ENCODE measurements at regions of chr10 and their contacts with region 1.

Region 1: DNA sequence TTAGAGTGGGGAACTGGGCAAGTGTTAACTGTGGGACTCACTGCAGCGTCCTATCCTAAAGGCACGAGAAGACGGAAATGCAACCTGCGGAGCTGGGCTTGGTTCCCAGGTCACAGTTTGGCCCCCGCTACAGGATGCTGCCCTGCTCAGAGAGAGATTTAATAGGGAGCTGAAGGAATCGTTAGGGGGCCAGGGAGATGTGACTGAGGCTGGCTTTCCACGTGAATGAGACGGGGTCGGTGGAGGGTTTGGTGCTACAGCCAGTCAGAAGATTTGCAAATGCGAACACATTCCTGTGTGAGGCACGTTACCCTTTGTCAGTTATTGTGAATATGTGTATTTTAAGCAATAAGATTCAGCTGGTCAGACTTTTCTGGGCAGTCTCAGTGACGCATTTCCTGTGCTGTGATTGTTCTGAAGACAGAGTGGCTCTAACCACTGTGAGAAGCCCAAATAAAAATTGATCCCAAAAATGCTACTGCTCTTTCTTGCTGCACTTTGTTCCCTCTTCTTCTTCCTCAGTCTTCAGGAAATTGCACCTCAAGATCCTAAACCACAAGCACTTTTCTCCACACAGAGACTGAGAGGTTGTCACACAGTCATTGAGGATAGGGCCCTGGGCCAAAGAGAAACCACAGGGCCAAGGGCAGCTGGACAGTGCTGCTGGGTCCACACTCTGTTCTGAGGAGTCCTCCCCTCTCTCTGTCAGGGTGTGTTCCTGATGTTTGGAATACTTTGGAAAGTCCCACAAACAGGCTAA is 21.2 kb downstream of the CYP17A1 start:
- DNase-seq: peak; percentile 92
- H3K4me3 ChIP-seq: no peak overlapping the region
- H3K27ac ChIP-seq: peak overlapping the region; percentile 99
- H3K4me1 ChIP-seq: peaks cover 42% of the 10 kb centered on the region
- H3K27me3 ChIP-seq: no peaks in the 10 kb centered on the region
- CTCF ChIP-seq: no peak
- POLR2A ChIP-seq: no peak

Region 2: DNA sequence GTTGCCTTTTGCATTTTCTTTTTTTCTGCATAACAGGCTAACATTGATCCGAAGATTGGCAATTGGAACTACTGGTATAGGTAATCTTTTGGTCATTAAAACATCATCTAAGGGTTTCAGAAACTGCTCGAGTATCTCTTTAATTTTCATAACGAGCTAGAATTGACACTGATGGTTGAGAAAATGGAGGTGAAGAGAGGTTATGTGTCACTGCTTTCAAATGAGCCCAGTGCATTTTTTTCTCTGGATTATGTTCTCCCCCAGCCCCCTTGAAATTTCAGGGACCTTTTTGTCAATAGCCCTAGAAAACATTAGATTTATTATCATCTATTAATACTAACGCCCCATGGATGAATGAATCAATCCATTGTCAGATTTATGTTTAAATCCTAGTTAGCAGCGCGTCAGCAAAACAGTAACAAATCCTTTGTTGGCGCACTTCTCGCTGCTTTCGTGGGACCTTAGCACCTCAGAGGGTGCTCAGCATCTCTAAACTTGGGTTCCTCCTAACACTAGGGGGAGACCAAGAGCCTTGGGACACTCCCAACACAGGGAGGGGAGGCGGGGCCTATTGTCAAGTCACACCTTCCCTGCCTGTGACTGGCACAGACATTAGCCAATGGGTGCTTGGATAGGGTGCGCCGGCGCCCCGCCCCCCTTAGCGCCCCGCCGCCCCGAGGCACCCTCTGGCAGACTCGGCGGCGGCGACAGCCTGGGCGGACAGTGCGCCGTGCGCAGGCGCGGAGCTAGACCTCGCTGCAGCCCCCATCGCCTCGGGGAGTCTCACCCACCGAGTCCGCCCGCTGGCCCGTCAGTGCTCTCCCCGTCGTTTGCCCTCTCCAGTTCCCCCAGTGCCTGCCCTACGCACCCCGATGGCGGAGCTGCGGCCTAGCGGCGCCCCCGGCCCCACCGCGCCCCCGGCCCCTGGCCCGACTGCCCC is 312.4 kb before region 1 on chr10 and contains the start of gene SUFU:
- CTCF ChIA-PET with region 1: no interaction called
- POLR2A ChIA-PET with region 1: no interaction called
- dilution Hi-C with region 1: no loop called
- intact Hi-C with region 1: loop called (anchors 1 kb)
- DNase-seq: peak; percentile 99
- H3K4me3 ChIP-seq: peak within 1 kb of the TSS; percentile 68 to 87 (median 76)
- H3K27ac ChIP-seq: peak within 1 kb of the TSS; percentile 52
- H3K4me1 ChIP-seq: peaks cover 16% of the 10 kb centered on the region
- H3K27me3 ChIP-seq: no peaks in the 10 kb centered on the region
- CTCF ChIP-seq: peak; percentile 89 to 91
- POLR2A ChIP-seq: peak; percentile 86
- total RNA-seq, gene SUFU: 14.5 and 16.3 TPM in 2 replicates

Region 3: GRCh38 chr10:102743588-102744373 is 72.2 kb before region 1 on chr10 and contains the start of gene WBP1L:
- CTCF ChIA-PET with region 1: interaction called, 4 read pairs
- POLR2A ChIA-PET with region 1: no interaction called
- dilution Hi-C with region 1: no loop called
- intact Hi-C with region 1: loop called (anchors 1 kb)
- DNase-seq: peak; percentile 100
- H3K4me3 ChIP-seq: peak within 1 kb of the TSS; percentile 43 to 91 (median 52)
- H3K27ac ChIP-seq: peak within 1 kb of the TSS; percentile 35
- H3K4me1 ChIP-seq: peaks cover 15% of the 10 kb centered on the region
- H3K27me3 ChIP-seq: no peaks in the 10 kb centered on the region
- CTCF ChIP-seq: no peak
- POLR2A ChIP-seq: peak; percentile 45
- total RNA-seq, gene WBP1L: 43.6 and 46.0 TPM in 2 replicates

Region 4: GRCh38 chr10:102776779-102777456 is 39.1 kb before region 1 on chr10:
- CTCF ChIA-PET with region 1: interaction called, 7 read pairs
- POLR2A ChIA-PET with region 1: interaction called, 5 read pairs
- dilution Hi-C with region 1: no loop called
- intact Hi-C with region 1: loop called (anchors 1 kb)
- DNase-seq: peak; percentile 92
- H3K4me3 ChIP-seq: peak overlapping the region; percentile 0 to 76 (median 54)
- H3K27ac ChIP-seq: peak overlapping the region; percentile 98
- H3K4me1 ChIP-seq: peaks cover 67% of the 10 kb centered on the region
- H3K27me3 ChIP-seq: no peaks in the 10 kb centered on the region
- CTCF ChIP-seq: no peak
- POLR2A ChIP-seq: peak; percentile 62

Region 5: GRCh38 chr10:102782673-102783551 is 33.1 kb before region 1 on chr10:
- CTCF ChIA-PET with region 1: no interaction called
- POLR2A ChIA-PET with region 1: no interaction called
- dilution Hi-C with region 1: no loop called
- intact Hi-C with region 1: loop called (anchors 1 kb)
- DNase-seq: peak; percentile 97
- H3K4me3 ChIP-seq: peak overlapping the region in 1 of 3 experiments; percentile 24
- H3K27ac ChIP-seq: peak overlapping the region; percentile 77
- H3K4me1 ChIP-seq: peaks cover 49% of the 10 kb centered on the region
- H3K27me3 ChIP-seq: no peaks in the 10 kb centered on the region
- CTCF ChIP-seq: no peak
- POLR2A ChIP-seq: no peak

Region 6: GRCh38 chr10:102802920-102803534 is 12.9 kb before region 1 on chr10:
- CTCF ChIA-PET with region 1: interaction called, 15 read pairs
- POLR2A ChIA-PET with region 1: no interaction called
- dilution Hi-C with region 1: no loop called
- intact Hi-C with region 1: loop called (anchors 1 kb)
- DNase-seq: peak; percentile 99
- H3K4me3 ChIP-seq: no peak overlapping the region
- H3K27ac ChIP-seq: peak overlapping the region; percentile 95
- H3K4me1 ChIP-seq: peaks cover 46% of the 10 kb centered on the region
- H3K27me3 ChIP-seq: no peaks in the 10 kb centered on the region
- CTCF ChIP-seq: no peak
- POLR2A ChIP-seq: peak; percentile 52